ENCODE measurements at regions of chr3 and their contacts with region 1.

Region 1: DNA sequence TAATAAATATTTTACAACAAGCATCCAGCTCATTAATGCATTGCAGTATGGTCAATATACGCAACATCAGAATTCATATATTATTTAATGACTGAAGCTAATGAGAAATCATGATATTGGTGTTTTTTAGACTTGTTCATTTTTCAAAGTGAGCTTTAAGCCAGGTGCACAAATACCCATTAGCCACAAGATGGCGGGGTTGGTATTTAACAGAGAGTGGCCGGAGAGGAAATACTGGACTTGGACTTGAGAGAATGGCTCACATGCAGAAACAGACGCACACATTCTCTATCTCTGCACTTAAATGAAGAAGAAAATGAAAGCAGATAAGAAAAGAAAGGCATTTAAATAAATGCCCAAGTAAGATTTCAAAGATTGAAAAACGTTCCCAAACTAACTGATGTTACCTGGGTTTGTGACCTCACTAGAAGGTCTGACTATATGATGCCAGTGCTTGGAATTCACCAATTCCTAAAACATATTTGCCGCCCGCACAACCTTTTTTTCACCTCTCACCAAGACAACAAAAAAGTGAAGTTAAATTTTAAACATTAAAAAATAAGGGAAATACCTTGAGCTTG is 21.2 kb upstream of the CRBN start:
- DNase-seq: no peak
- ATAC-seq: peak; percentile 74 to 75
- H3K4me3 ChIP-seq: no peak overlapping the region
- H3K27ac ChIP-seq: no peak overlapping the region
- H3K4me1 ChIP-seq: no peaks in the 10 kb centered on the region
- H3K27me3 ChIP-seq: no peaks in the 10 kb centered on the region
- CTCF ChIP-seq: peak; percentile 70

Region 2: DNA sequence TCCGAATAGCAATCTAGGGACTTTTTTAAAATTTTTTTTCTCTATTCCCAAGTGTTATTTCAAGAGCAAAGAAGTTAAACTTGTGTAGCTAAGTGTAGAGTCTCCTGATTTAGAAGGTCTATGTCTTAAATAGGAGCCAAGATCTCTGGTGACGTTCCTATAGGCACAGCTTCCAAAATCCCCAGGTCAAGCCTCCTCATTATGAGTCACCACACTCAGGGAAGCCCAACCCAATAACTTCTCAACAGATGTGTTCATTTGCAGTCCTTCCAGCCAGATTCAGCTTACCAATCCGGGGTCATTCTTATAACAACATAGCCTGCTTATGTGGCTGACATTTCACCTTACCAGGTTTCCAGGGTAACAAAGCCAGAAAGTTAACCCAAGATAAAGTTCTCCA is 360.8 kb before region 1 on chr3:
- intact Hi-C with region 1: no loop called
- DNase-seq: no peak
- ATAC-seq: no peak
- H3K4me3 ChIP-seq: no peak overlapping the region
- H3K27ac ChIP-seq: no peak overlapping the region
- H3K4me1 ChIP-seq: no peaks in the 10 kb centered on the region
- H3K27me3 ChIP-seq: no peaks in the 10 kb centered on the region
- CTCF ChIP-seq: no peak

Region 3: DNA sequence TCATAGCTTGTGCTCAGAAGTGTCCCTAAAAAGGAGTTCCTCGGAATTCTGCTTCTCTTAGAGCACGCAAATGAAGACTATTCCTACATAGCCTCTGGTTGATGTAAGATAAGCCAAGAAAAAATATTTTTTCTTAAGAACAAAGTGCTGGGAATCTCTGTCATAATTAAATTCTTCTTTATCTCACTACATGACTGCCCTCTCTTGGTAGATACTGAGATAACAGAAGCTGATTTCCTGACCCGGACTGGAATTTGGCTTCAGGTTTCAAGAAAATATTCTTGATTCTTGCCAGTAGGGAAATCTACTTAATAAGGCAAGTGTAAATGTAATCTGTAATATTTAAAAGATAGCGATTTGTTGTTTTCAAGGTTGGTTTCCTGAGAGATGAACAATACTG is 1071.1 kb after region 1 on chr3:
- intact Hi-C with region 1: loop called (anchors 10 kb)
- DNase-seq: no peak
- ATAC-seq: peak; percentile 49 to 56
- H3K4me3 ChIP-seq: no peak overlapping the region
- H3K27ac ChIP-seq: no peak overlapping the region
- H3K4me1 ChIP-seq: peaks cover 11% of the 10 kb centered on the region
- H3K27me3 ChIP-seq: no peaks in the 10 kb centered on the region
- CTCF ChIP-seq: peak; percentile 44